SK-N-SH (cell line): ENCODE measurements at regions of chr10 and their contacts with region 1.

Region 1: DNA sequence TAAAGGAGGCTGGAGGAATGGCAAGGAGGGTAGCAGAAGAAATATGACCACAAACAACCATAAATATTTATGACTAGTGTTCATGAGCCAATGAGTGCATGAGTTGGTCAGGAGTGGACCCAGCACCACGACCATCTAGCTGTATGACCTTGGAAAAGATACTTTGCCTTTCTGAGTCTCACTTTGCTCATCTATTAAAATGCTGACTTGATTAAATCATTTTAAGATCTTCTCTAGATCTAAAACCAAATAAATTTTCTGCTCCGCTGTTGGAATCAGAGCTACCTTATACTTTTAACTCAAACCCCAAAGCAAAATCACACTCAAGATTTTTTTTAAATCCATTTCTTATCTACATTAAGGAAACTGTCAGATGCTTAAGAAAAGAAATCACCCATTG is 207.0 kb downstream of the GPAM start:
- DNase-seq: no peak
- H3K4me3 ChIP-seq: no peak overlapping the region
- H3K27ac ChIP-seq: no peak overlapping the region
- H3K4me1 ChIP-seq: no peaks in the 10 kb centered on the region
- H3K27me3 ChIP-seq: no peaks in the 10 kb centered on the region
- CTCF ChIP-seq: no peak
- EP300 ChIP-seq: no peak
- RAD21 ChIP-seq: no peak

Region 2: DNA sequence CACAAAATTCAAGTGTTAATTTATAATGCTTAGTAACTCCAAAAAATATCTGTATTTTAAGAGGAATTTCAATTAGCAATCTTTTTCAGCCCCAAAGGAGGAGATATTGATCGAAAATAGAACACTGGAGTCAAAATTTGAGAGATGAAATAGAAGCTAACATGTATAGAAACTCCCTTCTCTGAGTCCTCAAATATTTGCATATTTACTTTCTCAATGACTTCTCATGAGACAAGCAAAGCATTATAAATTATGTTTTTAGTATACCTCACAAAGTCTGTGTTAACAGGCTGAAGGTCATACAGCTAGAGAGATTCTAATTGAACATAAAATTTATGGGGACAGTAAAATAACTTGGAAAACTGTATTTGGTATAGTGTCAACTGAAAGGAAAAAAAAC is 53.5 kb before region 1 on chr10:
- CTCF ChIA-PET with region 1: no interaction called
- POLR2A ChIA-PET with region 1: no interaction called
- DNase-seq: no peak
- H3K4me3 ChIP-seq: no peak overlapping the region
- H3K27ac ChIP-seq: no peak overlapping the region
- H3K4me1 ChIP-seq: no peaks in the 10 kb centered on the region
- H3K27me3 ChIP-seq: no peaks in the 10 kb centered on the region
- CTCF ChIP-seq: no peak
- EP300 ChIP-seq: no peak
- RAD21 ChIP-seq: no peak

Region 3: GRCh38 chr10:111990734-111991133 is 14.2 kb after region 1 on chr10:
- CTCF ChIA-PET with region 1: interaction called, 12 read pairs
- POLR2A ChIA-PET with region 1: no interaction called
- DNase-seq: peak; percentile 28
- H3K4me3 ChIP-seq: no peak overlapping the region
- H3K27ac ChIP-seq: no peak overlapping the region
- H3K4me1 ChIP-seq: peaks cover 0 to 29% of the 10 kb centered on the region in 2 experiments; a peak in 2 of 4 replicates
- H3K27me3 ChIP-seq: no peaks in the 10 kb centered on the region
- CTCF ChIP-seq: no peak
- EP300 ChIP-seq: no peak
- RAD21 ChIP-seq: peak; percentile 56